Activated CD4-positive, alpha-beta T cell treated with anti-CD3 and anti-CD28 coated beads for 36 hours (primary cell): ENCODE measurements at regions of chr19 and their contacts with region 1.

Region 1: GRCh38 chr19:5977785-5978605 is at the start of gene RANBP3:
- DNase-seq: peak; percentile 99
- ATAC-seq: peak; percentile 92
- H3K4me3 Mint-ChIP-seq: peak within 1 kb of the TSS; percentile 94
- H3K27ac Mint-ChIP-seq: peak within 1 kb of the TSS; percentile 90
- H3K4me1 Mint-ChIP-seq: peaks cover 56% of the 10 kb centered on the region
- H3K27me3 Mint-ChIP-seq: no peaks in the 10 kb centered on the region
- total RNA-seq, gene RANBP3: 85.5 to 103 TPM

Region 2: DNA sequence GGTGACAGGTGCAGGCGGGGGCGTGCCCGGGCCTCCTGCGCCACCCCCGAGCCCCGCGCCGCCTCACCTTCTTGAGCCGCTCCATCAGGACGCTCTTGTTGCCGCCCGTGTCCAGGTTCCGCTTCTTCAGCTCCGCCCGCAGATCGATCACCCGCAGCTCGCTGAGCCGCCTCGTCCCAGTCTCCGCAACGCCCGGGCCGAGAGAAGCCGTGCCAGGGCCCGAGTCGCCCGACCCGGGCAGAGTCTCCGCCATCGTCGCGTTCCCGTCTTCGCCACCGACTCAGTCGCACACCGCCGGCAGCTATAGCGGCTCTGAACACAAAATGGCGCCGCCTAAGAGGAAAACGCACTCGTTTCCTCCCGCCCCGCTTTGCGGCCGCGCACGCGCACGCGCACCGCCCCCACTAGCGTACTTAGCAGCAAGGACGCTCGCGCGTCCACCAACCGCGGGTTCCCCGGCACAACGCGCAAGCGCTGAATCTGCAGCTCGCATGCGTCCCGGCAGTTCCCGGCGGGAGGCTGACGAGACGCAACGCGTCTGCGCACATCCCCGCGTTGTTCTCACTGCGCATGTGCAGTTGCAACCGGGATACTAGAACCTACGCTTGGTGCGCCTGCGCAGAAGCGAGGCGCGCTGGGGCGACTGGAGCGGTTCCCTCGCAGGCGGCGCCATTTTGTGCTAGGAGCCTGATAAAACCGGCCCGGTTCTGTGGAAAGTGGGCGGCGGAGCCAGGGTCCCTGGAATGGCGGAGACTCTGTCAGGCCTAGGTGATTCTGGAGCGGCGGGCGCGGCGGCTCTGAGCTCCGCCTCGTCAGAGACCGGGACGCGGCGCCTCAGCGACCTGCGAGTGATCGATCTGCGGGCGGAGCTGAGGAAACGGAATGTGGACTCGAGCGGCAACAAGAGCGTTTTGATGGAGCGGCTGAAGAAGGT is 355.3 kb before region 1 on chr19 and contains the starts of genes SAFB and SAFB2:
- CTCF ChIA-PET with region 1: no interaction called
- POLR2A ChIA-PET with region 1: no interaction called
- intact Hi-C with region 1: loop called in 1 of 2 experiments (anchors 1 kb)
- DNase-seq: peak; percentile 100
- ATAC-seq: peak; percentile 92
- H3K4me3 Mint-ChIP-seq: peak within 1 kb of the TSS; percentile 100
- H3K27ac Mint-ChIP-seq: peak within 1 kb of the TSS; percentile 100
- H3K4me1 Mint-ChIP-seq: peaks cover 66% of the 10 kb centered on the region
- H3K27me3 Mint-ChIP-seq: no peaks in the 10 kb centered on the region
- total RNA-seq, gene SAFB: 100 to 118 TPM
- total RNA-seq, gene SAFB2: 65.0 to 78.6 TPM

Region 3: DNA sequence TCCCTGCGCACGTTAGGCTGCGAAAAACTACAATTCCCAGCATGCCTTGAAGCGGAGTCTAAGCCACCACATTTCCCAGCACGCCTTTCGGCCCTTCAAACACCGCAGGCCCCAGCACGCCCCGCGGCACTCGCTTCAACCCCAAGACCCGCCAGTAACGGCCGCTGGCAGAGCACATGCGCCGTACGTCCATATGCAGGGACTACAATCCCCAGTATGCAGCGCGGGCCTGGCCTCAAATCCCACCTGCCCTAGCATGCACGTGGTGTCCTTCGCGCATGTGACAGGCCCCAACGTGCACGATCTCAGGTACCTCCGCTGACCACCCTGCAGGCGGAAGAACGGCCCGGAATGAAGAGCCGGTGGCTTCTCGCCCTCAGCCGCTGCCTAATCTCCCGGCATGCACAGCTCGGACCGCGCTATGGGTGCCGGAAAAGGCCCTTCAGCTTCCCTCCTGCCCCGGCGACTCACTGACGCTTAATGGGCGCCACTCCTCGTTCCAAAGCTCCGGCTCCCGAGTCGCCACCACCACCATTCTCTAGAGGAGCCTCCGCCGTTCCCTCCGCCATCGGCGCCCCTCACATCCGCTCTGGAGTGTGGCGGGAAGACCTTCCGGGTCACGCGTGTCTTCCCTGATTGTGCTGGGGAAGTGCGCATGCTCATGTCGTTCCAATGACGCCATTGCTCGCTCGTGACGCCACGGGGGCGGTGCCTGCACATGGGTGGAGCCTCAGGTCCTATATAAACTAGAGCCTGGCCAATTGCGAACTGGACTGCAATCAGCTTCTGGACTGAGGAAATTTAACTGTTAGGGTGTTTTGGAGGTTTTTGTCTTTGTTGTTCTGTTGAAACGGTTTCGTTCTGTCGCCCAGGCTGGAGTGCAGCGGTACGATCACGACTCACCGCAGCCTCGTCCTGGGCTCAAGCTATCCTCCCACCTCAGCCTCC is 187.1 kb before region 1 on chr19 and contains the start of gene DUS3L:
- CTCF ChIA-PET with region 1: no interaction called
- POLR2A ChIA-PET with region 1: interaction called, 3 read pairs
- intact Hi-C with region 1: loop called in 1 of 2 experiments (anchors 1 kb)
- DNase-seq: peak; percentile 98
- ATAC-seq: peak; percentile 97
- H3K4me3 Mint-ChIP-seq: peak within 1 kb of the TSS; percentile 98
- H3K27ac Mint-ChIP-seq: peak within 1 kb of the TSS; percentile 100
- H3K4me1 Mint-ChIP-seq: peaks cover 13% of the 10 kb centered on the region
- H3K27me3 Mint-ChIP-seq: no peaks in the 10 kb centered on the region
- total RNA-seq, gene DUS3L: 59.4 to 63.9 TPM

Region 4: GRCh38 chr19:5953680-5954213 is 24.2 kb before region 1 on chr19:
- CTCF ChIA-PET with region 1: interaction called, 3 read pairs
- POLR2A ChIA-PET with region 1: interaction called, 3 read pairs
- intact Hi-C with region 1: loop called in 1 of 2 experiments (anchors 1 kb)
- DNase-seq: peak; percentile 72
- ATAC-seq: peak; percentile 35
- H3K4me3 Mint-ChIP-seq: peak overlapping the region; percentile 53
- H3K27ac Mint-ChIP-seq: peak overlapping the region; percentile 98
- H3K4me1 Mint-ChIP-seq: peaks cover 93% of the 10 kb centered on the region
- H3K27me3 Mint-ChIP-seq: no peaks in the 10 kb centered on the region

Region 5: GRCh38 chr19:6279931-6280591 is 302.1 kb after region 1 on chr19 and contains the start of gene MLLT1:
- CTCF ChIA-PET with region 1: no interaction called
- POLR2A ChIA-PET with region 1: no interaction called
- intact Hi-C with region 1: loop called in 1 of 2 experiments (anchors 1 kb)
- DNase-seq: peak; percentile 98
- ATAC-seq: peak; percentile 98
- H3K4me3 Mint-ChIP-seq: peak within 1 kb of the TSS; percentile 98
- H3K27ac Mint-ChIP-seq: peak within 1 kb of the TSS; percentile 93
- H3K4me1 Mint-ChIP-seq: peaks cover 38% of the 10 kb centered on the region
- H3K27me3 Mint-ChIP-seq: peaks cover 2% of the 10 kb centered on the region
- total RNA-seq, gene MLLT1: 45.0 to 46.6 TPM

Region 6: GRCh38 chr19:7197760-7198696 is 1220.0 kb after region 1 on chr19:
- CTCF ChIA-PET with region 1: no interaction called
- POLR2A ChIA-PET with region 1: no interaction called
- intact Hi-C with region 1: loop called in 1 of 2 experiments (anchors 5 kb)
- DNase-seq: peak; percentile 95
- ATAC-seq: peak; percentile 84
- H3K4me3 Mint-ChIP-seq: peak overlapping the region; percentile 77
- H3K27ac Mint-ChIP-seq: peak overlapping the region; percentile 88
- H3K4me1 Mint-ChIP-seq: peaks cover 16% of the 10 kb centered on the region
- H3K27me3 Mint-ChIP-seq: peaks cover 21% of the 10 kb centered on the region